Cardiac septum (tissue), 1 donor: ENCODE measurements at regions of chr2 and their contacts with region 1.

Region 1: GRCh38 chr2:231297108-231297908 is 98.2 kb upstream of the B3GNT7 start:
- DNase-seq: no peak

Region 2: GRCh38 chr2:230942920-230943896 is 354.1 kb before region 1 on chr2:
- intact Hi-C with region 1: no loop called
- DNase-seq: peak; percentile 76

Region 3: DNA sequence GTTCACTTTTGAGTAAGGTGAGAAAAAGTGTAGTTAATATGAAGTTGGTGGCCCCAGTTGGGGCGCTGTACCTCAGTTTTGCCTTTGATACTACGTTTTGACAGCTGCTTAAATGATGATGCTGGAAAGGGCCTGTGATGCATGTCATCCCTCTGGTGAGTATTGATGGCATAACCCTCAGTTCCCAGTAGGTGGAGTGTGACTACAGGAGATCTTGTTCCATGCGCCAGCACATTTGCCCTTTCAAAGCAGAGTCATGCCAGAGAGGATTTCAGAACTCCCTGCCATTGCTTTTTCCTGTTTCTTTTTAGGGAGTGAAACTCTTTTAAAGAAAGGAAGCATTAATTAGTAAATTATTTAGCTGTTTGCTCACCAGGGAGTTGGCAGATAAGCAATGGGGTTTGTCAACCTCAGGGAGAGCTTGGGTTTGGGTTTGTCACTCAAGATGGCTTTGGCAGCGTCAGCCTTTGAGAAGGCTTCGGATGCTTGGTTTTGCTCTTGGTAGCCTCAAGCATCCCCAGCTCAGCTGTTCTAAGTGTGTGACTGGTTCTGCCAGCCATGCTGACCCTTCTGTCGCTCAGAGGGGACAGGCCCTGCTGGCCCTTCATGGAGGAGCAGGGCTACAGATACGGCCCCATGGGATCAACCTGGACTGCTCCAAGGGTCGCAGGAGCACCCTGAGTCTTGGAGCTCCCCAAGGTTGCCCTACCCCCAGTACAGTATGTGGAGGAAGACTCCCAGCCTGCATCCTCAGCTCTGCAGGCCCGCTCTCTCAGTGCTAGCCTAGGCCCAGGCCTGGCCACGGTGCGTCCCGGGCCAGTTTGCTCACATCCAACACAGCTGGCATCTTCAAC is 69.8 kb before region 1 on chr2:
- intact Hi-C with region 1: loop called (anchors 5 kb)
- DNase-seq: peak; percentile 70

Region 4: GRCh38 chr2:231245253-231246094 is 51.8 kb before region 1 on chr2:
- intact Hi-C with region 1: loop called (anchors 5 kb)
- DNase-seq: peak; percentile 72

Region 5: DNA sequence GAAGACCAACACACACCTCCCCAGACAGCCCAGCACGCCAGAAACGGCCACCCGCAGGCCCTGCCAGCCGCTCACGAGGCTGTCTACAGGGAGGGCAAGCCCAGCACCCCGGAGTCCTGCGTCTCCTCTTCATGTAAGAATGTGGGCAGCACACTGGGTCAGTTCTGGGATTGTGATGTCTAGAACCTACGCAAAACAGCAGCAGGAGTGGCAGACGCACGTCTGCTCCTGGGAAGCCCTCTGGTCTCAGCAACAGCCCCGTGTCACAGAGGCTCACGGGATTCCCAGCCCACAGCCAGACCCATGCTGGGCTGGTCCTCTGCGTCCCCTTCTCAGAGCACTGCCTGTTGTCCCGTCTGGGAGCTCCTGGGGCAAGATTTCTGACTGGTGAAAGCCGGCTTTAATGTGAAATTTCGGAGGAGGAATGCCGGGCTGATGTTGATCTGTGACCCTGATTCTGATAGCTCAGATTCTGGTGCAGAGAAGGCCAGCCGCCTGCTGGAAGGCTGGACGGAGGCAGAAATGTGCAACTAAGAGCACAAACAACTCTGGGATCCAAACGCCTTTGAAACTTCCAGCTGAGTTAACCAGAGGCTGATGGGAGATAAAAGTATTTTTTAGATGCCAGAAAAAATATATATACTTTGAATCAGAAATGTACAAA is 58.6 kb after region 1 on chr2:
- intact Hi-C with region 1: loop called (anchors 5 kb)
- DNase-seq: no peak

Region 6: DNA sequence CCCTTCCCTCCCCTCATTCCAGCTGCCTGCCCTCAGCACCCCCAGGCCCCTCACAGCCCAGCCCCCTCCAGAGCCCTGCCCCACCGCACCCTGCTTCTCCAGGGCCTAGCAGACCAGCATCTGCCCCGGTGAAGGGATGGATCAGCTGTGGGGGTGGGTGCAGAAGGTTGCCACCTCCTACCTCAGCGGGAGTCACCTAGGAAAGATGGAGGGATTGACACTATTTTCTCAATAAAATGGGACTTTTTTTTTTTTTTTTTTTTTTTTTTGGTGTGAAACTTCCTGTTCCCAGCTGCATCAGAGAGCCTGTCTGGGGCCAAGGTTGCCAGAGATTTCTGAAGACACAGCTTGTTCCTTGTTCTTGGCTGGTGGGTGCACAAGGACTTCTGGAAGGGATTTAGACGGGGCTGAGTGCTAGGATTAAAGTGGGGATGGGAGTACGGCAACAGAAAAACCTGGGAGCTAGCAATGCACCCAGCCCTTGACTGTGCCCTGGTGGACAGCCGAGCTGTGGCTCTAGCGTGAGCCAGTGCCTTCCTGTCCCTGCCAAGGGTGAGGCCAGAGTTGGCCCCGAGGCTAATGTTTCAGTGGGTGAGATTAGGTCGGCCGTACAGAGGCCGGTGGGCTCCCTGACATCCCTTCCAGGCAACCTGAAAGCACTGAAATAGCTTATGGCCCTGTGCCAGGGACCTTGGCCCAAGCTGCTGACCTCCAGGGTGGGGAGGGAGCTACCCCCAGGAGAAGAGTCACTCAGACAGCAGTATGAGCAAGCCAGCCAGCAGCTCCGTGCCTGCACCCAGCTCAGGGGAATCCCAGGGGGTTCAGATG is 102.8 kb after region 1 on chr2:
- intact Hi-C with region 1: loop called (anchors 2 kb)
- DNase-seq: no peak